ENCODE measurements at regions of chrX and their contacts with region 1.

Region 1: DNA sequence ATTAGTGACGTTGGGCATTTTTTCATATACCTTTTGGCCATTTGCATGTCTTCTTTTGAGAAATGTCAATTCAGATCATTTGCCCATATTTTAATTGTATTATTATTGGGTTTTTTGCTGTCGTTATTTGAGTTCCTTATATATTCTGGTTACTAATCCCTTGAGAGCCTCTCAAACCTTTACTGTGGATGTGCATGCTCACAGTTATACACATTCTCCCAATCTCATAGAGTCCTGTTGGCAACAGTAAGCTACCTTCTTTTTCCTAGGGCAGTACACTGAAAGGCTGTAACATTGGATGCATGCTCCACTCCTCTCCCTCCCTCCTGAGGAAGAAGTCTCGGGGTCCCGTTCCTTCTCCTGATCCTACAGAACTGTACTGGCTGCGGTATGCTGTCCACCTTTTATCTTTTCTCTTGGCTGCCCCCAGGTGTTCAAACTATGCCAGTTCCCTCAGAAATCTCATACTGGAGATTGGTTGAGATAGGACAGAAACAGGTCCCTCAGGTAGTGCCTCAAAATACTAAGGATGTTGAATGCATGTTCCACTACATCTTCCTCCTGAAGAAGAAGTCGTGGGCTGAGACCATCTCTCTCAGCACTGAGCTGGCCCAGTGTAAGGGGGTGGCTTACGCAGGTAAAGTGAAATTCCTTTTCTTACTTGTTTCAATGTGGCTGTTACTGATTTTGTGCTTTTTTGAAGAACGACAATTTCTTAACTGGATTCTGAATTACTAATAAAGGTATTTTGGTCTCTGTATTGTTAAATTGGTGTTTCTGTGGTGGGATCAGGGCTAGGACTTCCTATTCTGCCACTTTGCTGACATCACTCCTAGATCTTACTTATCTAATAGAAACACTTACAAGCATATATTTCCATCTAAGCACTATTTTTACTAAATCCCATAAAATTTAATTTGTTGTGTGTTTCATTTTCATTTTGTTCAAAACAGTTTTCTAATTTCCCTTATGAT is 145.4 kb upstream of the HUWE1 start:
- DNase-seq: peak; percentile 32 to 45 (median 38)
- H3K4me3 ChIP-seq: no peak overlapping the region
- H3K4me3 Mint-ChIP-seq: no peak overlapping the region
- H3K27ac ChIP-seq: no peak overlapping the region
- H3K27ac Mint-ChIP-seq: peak overlapping the region in 1 of 7 donors; percentile 75
- H3K4me1 ChIP-seq: no peaks in the 10 kb centered on the region
- H3K4me1 Mint-ChIP-seq: peaks cover 2 to 6% (median 4%) of the 10 kb centered on the region in 4 donors
- H3K27me3 ChIP-seq: no peaks in the 10 kb centered on the region
- H3K27me3 Mint-ChIP-seq: no peaks in the 10 kb centered on the region

Region 2: GRCh38 chrX:53678667-53679066 is 153.3 kb before region 1 on chrX:
- CTCF ChIA-PET with region 1: interaction called, 18 read pairs
- POLR2A ChIA-PET with region 1: interaction called, 4 read pairs
- intact Hi-C with region 1: loop called (anchors 1 kb)
- DNase-seq: peak; percentile 19 to 41 (median 26)
- H3K4me3 ChIP-seq: no peak overlapping the region
- H3K4me3 Mint-ChIP-seq: peak overlapping the region in 2 of 8 donors; percentile 25 to 64
- H3K27ac ChIP-seq: no peak overlapping the region
- H3K27ac Mint-ChIP-seq: peak overlapping the region in 3 of 7 donors; percentile 39 to 80 (median 47)
- H3K4me1 ChIP-seq: peaks cover 44% of the 10 kb centered on the region
- H3K4me1 Mint-ChIP-seq: peaks cover 27 to 72% (median 46%) of the 10 kb centered on the region in 4 donors
- H3K27me3 ChIP-seq: no peaks in the 10 kb centered on the region
- H3K27me3 Mint-ChIP-seq: no peaks in the 10 kb centered on the region

Region 3: DNA sequence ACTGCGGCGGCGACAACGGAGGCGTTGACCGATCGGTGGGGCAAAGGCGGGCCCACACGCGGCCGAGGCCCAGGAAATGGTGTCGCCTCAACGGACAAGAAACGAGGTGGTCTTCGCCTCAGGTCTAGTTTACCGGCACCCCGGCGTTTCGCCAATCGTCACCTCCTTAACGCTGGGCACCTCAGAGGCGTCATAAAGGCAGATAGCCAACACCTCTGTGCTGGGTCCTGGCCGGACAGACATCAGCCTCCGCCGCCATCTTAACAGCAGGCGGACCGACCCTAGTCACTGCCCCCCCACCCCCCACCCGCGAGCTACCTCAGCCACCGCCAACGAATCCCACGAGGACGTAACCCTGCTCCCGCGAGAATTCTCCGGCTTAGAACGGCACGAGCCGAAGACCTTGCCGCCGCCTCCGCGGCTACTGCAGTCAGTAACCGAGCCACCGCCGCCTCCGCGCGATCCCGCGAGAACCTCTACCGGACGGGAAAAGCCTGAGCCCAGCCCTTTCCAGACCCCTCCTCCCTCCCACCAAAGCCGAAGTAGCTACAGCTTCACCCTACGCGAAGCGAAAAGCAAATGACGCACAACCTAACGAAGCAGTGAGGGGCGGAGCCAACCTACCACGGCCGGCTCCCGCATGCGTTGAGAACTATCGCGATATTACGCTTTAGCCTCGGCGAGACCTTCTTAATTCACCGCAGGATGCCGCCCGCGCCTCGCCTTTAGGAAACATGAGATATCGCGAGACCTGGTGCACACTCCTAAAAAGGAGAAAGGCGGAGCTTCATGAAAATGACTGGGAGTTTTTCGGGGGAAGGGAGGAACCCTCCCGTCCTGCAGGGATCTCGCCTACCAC is 148.2 kb before region 1 on chrX:
- CTCF ChIA-PET with region 1: interaction called, 18 read pairs
- POLR2A ChIA-PET with region 1: interaction called, 4 read pairs
- intact Hi-C with region 1: loop called (anchors 1 kb)
- DNase-seq: peak; percentile 88 to 97 (median 95)
- H3K4me3 ChIP-seq: peak overlapping the region; percentile 65 to 66
- H3K4me3 Mint-ChIP-seq: peak overlapping the region; percentile 88 to 97 (median 90)
- H3K27ac ChIP-seq: peak overlapping the region; percentile 94
- H3K27ac Mint-ChIP-seq: peak overlapping the region; percentile 87 to 99 (median 97)
- H3K4me1 ChIP-seq: peaks cover 41% of the 10 kb centered on the region
- H3K4me1 Mint-ChIP-seq: peaks cover 16 to 52% (median 33%) of the 10 kb centered on the region in 4 donors
- H3K27me3 ChIP-seq: no peaks in the 10 kb centered on the region
- H3K27me3 Mint-ChIP-seq: no peaks in the 10 kb centered on the region

Region 4: DNA sequence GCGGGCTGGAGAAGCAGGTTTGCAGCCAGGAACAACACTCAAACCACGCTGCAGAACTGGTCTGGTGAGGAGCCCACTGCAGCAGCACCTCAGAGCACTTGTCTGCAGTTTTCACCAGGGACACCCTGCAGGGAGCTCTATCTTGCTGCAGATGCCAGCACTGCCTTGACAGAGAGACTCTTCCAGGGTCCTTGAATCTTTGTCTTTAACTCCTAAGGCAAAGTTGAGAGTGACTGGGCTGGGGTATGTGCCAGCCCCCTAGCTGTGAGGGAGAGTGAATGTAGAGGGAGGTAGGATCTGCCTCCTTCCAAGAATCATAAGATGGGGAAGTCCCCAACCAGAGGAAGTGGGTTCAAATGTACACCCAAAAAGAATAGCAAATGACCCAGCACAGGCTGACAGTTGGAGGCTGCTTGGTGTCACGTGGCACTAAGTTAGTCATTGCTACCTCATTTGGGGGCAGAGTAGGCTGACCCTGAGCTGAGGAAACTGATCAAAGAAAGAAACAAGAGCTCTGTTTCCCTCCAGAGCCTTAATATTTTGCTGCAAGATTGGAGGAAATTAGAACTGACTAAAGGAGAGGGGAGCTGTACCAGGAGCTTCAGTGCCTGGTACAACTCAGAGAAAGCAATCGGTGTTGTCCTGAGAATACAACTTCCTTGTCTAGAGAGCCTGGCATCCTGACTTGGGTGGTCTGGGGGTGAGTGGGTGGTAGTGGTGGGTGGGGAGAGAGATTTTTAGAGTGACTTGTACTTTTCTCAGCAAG is 117.2 kb before region 1 on chrX:
- CTCF ChIA-PET with region 1: no interaction called
- POLR2A ChIA-PET with region 1: interaction called, 3 read pairs
- intact Hi-C with region 1: loop called (anchors 1 kb)
- DNase-seq: peak; percentile 65 to 84 (median 70)
- H3K4me3 ChIP-seq: peak overlapping the region in 1 of 2 donors; percentile 38
- H3K4me3 Mint-ChIP-seq: peak overlapping the region; percentile 83 to 92 (median 86)
- H3K27ac ChIP-seq: peak overlapping the region; percentile 81
- H3K27ac Mint-ChIP-seq: peak overlapping the region; percentile 93 to 99 (median 95)
- H3K4me1 ChIP-seq: peaks cover 51% of the 10 kb centered on the region
- H3K4me1 Mint-ChIP-seq: peaks cover 35 to 57% (median 51%) of the 10 kb centered on the region in 4 donors
- H3K27me3 ChIP-seq: no peaks in the 10 kb centered on the region
- H3K27me3 Mint-ChIP-seq: no peaks in the 10 kb centered on the region

Region 5: DNA sequence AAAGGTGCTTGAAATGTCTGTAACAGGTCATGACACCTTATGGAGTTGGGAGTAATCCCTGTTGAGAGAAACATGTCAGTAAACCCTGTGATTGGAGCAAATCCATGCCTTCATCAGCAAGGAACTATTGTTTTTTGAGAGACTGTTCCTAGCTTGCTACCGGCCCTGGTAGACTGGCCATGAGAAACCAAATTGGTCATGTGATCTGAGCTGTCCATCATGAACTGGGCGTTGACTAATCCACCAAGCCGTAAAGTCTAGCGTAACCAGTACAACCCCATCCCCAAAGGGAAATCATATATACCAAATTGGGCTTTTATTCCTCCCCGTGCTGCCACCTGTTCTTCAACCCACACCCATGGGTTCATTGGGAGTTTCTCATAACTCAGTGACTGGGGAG is 68.7 kb after region 1 on chrX:
- CTCF ChIA-PET with region 1: no interaction called
- POLR2A ChIA-PET with region 1: no interaction called
- intact Hi-C with region 1: no loop called
- DNase-seq: no peak
- H3K4me3 ChIP-seq: no peak overlapping the region
- H3K4me3 Mint-ChIP-seq: no peak overlapping the region
- H3K27ac ChIP-seq: no peak overlapping the region
- H3K27ac Mint-ChIP-seq: no peak overlapping the region
- H3K4me1 ChIP-seq: no peaks in the 10 kb centered on the region
- H3K4me1 Mint-ChIP-seq: no peaks in the 10 kb centered on the region
- H3K27me3 ChIP-seq: no peaks in the 10 kb centered on the region
- H3K27me3 Mint-ChIP-seq: peaks cover 0 to 2% of the 10 kb centered on the region in 2 donors

Measured in CD4-positive, alpha-beta memory T cell (primary cell).